ENCODE measurements at regions of chr6 and their contacts with region 1.

Region 1: DNA sequence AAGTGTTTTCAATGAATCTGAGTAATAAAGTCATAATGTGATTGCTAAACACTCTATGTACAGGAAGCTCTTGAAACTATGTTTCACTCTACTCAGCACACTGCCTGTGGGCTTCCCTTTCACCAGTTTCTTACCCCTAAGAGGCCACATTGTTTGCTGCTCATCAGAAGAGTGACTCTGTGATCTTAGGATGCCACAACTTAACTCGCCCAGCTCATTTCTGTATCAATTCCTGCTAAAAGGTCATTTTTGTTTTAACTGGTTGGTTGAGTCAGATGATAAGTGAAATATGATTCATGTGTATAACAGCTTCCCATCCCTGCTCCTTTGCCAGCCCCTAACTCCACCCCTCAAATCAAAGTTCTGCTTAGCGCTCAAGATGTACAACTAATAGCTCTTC is 9.8 kb upstream of the NDUFAF4 start:
- DNase-seq: peak; percentile 79
- H3K4me3 Mint-ChIP-seq: no peak overlapping the region
- H3K27ac Mint-ChIP-seq: peak overlapping the region; percentile 72
- H3K4me1 Mint-ChIP-seq: peaks cover 24% of the 10 kb centered on the region
- H3K27me3 Mint-ChIP-seq: peaks cover 22% of the 10 kb centered on the region

Region 2: DNA sequence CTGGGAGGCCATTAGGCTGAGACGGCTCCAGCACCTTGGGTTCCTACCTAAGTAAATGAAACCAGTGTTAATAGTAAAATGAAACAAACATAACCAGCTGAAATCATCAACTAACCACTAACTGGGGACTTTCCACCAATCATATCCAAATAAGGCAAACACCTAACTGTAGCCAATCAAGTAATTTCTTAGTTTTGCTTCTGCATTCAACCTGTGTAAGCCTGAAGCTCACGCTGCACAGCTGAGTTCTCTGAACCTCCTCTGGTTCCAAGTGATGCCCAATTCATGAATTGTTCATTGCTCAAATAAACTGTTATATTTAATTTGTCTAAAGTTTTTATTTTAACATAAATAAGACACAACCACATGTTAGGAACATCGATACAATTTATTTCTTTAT is 39.6 kb after region 1 on chr6:
- CTCF ChIA-PET with region 1: interaction called, 3 read pairs
- intact Hi-C with region 1: loop called (anchors 2 kb)
- DNase-seq: no peak
- H3K4me3 Mint-ChIP-seq: no peak overlapping the region
- H3K27ac Mint-ChIP-seq: no peak overlapping the region
- H3K4me1 Mint-ChIP-seq: peaks cover 4% of the 10 kb centered on the region
- H3K27me3 Mint-ChIP-seq: no peaks in the 10 kb centered on the region

Region 3: DNA sequence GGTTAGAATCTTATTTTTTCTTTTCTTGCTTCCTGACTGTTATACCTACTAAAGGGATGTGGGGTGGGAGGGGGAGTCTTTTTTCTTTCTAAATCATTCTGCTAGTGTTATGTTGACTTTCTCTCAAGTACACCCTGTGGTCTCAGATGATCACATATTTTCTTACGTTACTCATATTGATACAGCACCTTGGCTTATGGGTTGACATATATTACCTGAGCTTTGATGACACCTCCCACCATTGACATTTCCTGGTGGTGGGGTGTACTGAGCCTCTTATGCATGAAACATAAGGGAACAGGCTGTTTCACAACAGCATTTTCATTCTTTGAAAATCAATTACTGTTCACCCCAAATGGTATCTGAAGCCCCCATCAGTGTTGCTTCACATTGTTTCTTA is 205.7 kb after region 1 on chr6:
- CTCF ChIA-PET with region 1: no interaction called
- intact Hi-C with region 1: loop called (anchors 1 kb)
- DNase-seq: peak; percentile 22
- H3K4me3 Mint-ChIP-seq: no peak overlapping the region
- H3K27ac Mint-ChIP-seq: no peak overlapping the region
- H3K4me1 Mint-ChIP-seq: peaks cover 15% of the 10 kb centered on the region
- H3K27me3 Mint-ChIP-seq: no peaks in the 10 kb centered on the region

Region 4: GRCh38 chr6:97563529-97563928 is 656.0 kb after region 1 on chr6:
- CTCF ChIA-PET with region 1: no interaction called
- intact Hi-C with region 1: no loop called
- DNase-seq: no peak
- H3K4me3 Mint-ChIP-seq: no peak overlapping the region
- H3K27ac Mint-ChIP-seq: no peak overlapping the region
- H3K4me1 Mint-ChIP-seq: no peaks in the 10 kb centered on the region
- H3K27me3 Mint-ChIP-seq: no peaks in the 10 kb centered on the region

Measured in activated naive CD4-positive, alpha-beta T cell treated with anti-CD3 and anti-CD28 coated beads for 36 hours (primary cell).